MCF 10A (cell line): ENCODE measurements at regions of chr17 and their contacts with region 1.

Region 1: GRCh38 chr17:56939901-56940343 is 20.9 kb downstream of the COIL start:
- DNase-seq: peak; percentile 71
- H3K4me3 Mint-ChIP-seq: no peak overlapping the region
- H3K27ac Mint-ChIP-seq: no peak overlapping the region
- H3K4me1 Mint-ChIP-seq: peaks cover 15% of the 10 kb centered on the region
- H3K27me3 Mint-ChIP-seq: no peaks in the 10 kb centered on the region
- CTCF ChIP-seq: peak; percentile 84

Region 2: DNA sequence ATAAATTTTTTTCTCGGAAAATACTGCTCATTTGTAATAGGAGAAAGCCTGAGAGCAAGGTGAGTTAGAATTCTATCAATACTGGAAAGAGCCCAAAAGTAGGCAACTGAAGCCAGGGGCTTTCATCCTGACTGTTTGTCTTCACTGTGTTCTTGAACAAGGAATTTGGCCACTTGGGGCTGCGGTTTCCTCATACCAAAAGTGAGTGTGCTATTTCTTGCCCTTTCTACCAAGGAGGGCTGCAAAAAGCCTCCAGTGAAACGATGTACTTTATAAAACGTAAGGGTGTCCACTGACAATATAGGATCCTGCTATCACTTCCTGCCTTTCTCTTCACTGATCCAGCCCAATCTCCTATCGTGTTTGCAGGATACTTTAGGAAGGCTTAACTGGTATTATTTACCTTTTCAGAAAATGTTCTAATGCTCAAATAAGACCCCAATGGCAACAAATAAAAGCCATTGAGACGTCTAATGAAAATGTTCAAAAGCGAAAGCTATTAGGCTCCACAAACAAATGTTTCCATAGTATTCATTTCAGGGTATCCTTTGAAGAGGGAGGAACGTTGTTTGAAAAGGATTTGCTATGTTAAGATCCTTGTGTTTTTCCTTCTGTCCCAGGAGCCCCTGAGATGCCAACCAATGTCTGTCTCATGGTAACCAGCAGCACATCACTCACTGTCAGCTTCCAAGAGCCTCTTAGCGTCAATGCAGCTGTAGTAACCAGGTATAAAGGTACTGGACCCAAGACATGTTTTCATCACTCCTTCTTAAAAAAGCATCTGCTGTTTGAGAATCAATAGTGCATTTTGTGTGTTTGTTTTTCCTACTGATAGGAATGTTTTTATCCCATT is 565.7 kb before region 1 on chr17:
- CTCF ChIA-PET with region 1: no interaction called
- POLR2A ChIA-PET with region 1: no interaction called
- intact Hi-C with region 1: no loop called
- DNase-seq: no peak
- H3K4me3 Mint-ChIP-seq: no peak overlapping the region
- H3K27ac Mint-ChIP-seq: no peak overlapping the region
- H3K4me1 Mint-ChIP-seq: no peaks in the 10 kb centered on the region
- H3K27me3 Mint-ChIP-seq: no peaks in the 10 kb centered on the region
- CTCF ChIP-seq: no peak

Region 3: GRCh38 chr17:56918916-56919639 is 20.8 kb before region 1 on chr17:
- CTCF ChIA-PET with region 1: interaction called, 11 read pairs
- POLR2A ChIA-PET with region 1: interaction called, 4 read pairs
- intact Hi-C with region 1: no loop called
- DNase-seq: peak; percentile 95
- H3K4me3 Mint-ChIP-seq: no peak overlapping the region
- H3K27ac Mint-ChIP-seq: peak overlapping the region; percentile 33
- H3K4me1 Mint-ChIP-seq: peaks cover 33% of the 10 kb centered on the region
- H3K27me3 Mint-ChIP-seq: no peaks in the 10 kb centered on the region
- CTCF ChIP-seq: no peak